ENCODE measurements at regions of chr13 and their contacts with region 1.

Region 1: GRCh38 chr13:44191504-44192171 is 182.0 kb upstream of the SERP2 start:
- DNase-seq: no peak
- H3K4me3 ChIP-seq: no peak overlapping the region
- H3K27ac ChIP-seq: no peak overlapping the region
- H3K4me1 ChIP-seq: no peaks in the 10 kb centered on the region
- H3K27me3 ChIP-seq: no peaks in the 10 kb centered on the region
- CTCF ChIP-seq: peak; percentile 35 to 82 (median 59)
- EP300 ChIP-seq: no peak
- POLR2A ChIP-seq: no peak
- RAD21 ChIP-seq: peak; percentile 61 to 79

Region 2: DNA sequence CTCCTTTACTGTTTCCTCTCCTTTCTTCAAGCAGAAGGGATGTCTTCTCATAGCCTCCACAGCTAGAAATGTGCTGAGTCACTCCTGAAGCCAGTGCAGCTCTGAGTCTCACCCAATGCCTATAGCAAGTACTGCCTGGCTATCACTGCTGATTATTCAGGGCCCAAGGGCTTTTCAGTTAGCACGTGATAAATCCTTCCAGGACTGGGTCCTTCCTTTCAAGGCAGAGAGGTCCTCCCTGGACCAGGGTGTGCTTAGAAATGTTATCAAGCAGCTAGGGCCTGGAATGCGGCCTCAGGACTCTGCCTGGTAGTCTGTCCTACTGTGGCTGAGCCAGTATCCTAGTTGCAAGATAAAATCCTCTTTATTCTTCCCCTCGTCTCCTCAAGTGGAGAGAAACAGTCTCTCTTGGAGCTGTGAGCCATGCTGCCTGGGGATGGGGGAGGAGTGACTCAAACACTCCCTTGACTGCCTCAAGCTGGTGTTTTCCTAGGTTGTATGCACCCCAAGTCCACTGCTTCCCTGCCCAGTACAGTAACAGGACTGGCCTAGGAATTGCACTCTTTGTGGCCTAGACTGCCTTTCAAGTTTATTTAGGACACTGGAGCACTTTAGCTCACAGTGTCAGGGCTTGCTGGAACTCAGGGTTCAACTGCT is 16.7 kb before region 1 on chr13:
- CTCF ChIA-PET with region 1: interaction called, 14 read pairs
- POLR2A ChIA-PET with region 1: no interaction called
- DNase-seq: no peak
- H3K4me3 ChIP-seq: no peak overlapping the region
- H3K27ac ChIP-seq: no peak overlapping the region
- H3K4me1 ChIP-seq: peaks cover 0 to 3% (median 0%) of the 10 kb centered on the region in 4 experiments; a peak in 1 of 7 replicates
- H3K27me3 ChIP-seq: no peaks in the 10 kb centered on the region
- CTCF ChIP-seq: no peak
- EP300 ChIP-seq: no peak
- POLR2A ChIP-seq: no peak
- RAD21 ChIP-seq: no peak

Region 3: GRCh38 chr13:44206434-44206833 is 14.8 kb after region 1 on chr13:
- CTCF ChIA-PET with region 1: interaction called, 15 read pairs
- POLR2A ChIA-PET with region 1: interaction called, 3 read pairs
- DNase-seq: no peak
- H3K4me3 ChIP-seq: no peak overlapping the region
- H3K27ac ChIP-seq: no peak overlapping the region
- H3K4me1 ChIP-seq: peaks cover 0 to 4% (median 0%) of the 10 kb centered on the region in 4 experiments; a peak in 1 of 7 replicates
- H3K27me3 ChIP-seq: no peaks in the 10 kb centered on the region
- CTCF ChIP-seq: no peak
- EP300 ChIP-seq: no peak
- POLR2A ChIP-seq: no peak
- RAD21 ChIP-seq: no peak

Region 4: DNA sequence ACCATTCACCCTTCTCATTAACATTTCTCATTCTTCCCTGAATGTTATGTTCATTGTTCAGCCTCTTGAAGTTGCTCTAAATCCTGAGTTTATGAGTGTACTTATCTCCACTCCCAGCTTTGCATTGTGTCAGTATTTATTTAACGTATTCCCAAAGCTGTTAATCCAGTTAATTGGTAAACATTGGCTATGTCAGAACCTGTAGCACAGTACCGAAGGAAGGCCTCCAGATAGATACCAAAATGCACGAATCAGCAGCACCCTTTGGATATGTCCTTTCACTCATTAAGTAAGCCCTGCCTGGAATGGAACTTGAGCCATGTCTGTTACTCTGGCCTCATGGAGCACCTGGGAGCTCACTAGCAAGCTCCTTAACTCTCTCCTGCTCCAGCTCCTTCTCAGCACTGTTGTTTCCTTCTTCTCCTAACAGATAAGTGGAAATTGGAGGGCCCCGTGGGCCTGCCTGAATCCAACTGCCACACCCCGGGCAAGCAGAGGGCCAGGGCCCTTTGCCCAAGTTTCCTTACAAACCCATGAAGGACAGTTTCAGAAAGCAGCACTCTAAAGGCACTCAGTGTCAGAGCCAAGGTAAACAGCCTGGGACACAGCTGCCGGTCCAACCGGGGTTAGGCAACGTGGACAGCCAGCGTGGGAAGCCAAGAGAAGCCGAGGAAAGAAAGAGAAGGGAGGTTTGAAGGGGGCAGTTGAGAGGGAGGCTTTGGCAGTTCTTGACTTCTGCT is 27.0 kb after region 1 on chr13:
- CTCF ChIA-PET with region 1: interaction called, 10 read pairs
- POLR2A ChIA-PET with region 1: no interaction called
- DNase-seq: no peak
- H3K4me3 ChIP-seq: no peak overlapping the region
- H3K27ac ChIP-seq: no peak overlapping the region
- H3K4me1 ChIP-seq: no peaks in the 10 kb centered on the region; a peak in 1 of 7 replicates
- H3K27me3 ChIP-seq: no peaks in the 10 kb centered on the region
- CTCF ChIP-seq: no peak
- EP300 ChIP-seq: no peak
- POLR2A ChIP-seq: no peak
- RAD21 ChIP-seq: no peak

Region 5: GRCh38 chr13:44243198-44243857 is 51.7 kb after region 1 on chr13:
- CTCF ChIA-PET with region 1: interaction called, 14 read pairs
- POLR2A ChIA-PET with region 1: no interaction called
- DNase-seq: peak; percentile 60 to 64
- H3K4me3 ChIP-seq: no peak overlapping the region
- H3K27ac ChIP-seq: no peak overlapping the region
- H3K4me1 ChIP-seq: no peaks in the 10 kb centered on the region
- H3K27me3 ChIP-seq: no peaks in the 10 kb centered on the region
- CTCF ChIP-seq: peak; percentile 78 to 92 (median 78)
- EP300 ChIP-seq: no peak
- POLR2A ChIP-seq: no peak
- RAD21 ChIP-seq: peak; percentile 91 to 96

Region 6: DNA sequence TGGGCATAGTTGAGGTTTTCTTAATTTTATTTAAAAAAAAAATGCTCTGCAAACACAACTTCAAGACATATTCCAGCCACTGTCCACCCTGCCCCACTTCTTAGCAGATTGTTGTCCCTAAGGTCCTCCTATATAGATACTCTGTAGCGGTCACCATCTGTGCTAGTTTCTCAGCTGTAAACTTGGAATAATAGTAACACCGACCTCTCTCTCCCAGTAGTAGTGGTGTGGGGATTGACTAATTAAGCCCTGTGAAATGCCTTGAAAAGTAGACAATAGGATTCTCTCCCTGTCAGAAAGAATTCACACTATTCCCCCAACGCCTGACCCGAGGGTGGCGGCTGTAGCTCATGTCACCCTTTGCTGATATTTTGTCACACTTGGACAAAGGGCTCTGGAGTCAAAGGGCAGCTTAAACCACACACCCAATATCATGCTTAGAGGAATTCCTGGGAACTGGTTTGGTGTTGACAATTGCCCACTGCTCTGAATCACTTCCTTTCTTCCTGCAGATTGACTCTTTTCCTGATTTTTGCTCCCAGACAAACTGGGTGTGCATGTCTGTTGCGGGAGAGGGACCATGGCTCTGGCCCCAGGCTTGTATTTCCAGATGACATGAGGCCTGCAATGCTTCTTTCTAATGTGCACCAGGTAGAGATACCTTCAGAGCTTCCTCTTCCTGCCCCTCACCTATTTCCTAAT is 172.9 kb after region 1 on chr13:
- CTCF ChIA-PET with region 1: no interaction called
- POLR2A ChIA-PET with region 1: no interaction called
- DNase-seq: no peak
- H3K4me3 ChIP-seq: no peak overlapping the region
- H3K27ac ChIP-seq: no peak overlapping the region
- H3K4me1 ChIP-seq: no peaks in the 10 kb centered on the region
- H3K27me3 ChIP-seq: no peaks in the 10 kb centered on the region
- CTCF ChIP-seq: no peak
- EP300 ChIP-seq: no peak
- POLR2A ChIP-seq: no peak
- RAD21 ChIP-seq: no peak